Sigmoid colon (tissue), 7 donors: ENCODE measurements at regions of chr17 and their contacts with region 1.

Region 1: DNA sequence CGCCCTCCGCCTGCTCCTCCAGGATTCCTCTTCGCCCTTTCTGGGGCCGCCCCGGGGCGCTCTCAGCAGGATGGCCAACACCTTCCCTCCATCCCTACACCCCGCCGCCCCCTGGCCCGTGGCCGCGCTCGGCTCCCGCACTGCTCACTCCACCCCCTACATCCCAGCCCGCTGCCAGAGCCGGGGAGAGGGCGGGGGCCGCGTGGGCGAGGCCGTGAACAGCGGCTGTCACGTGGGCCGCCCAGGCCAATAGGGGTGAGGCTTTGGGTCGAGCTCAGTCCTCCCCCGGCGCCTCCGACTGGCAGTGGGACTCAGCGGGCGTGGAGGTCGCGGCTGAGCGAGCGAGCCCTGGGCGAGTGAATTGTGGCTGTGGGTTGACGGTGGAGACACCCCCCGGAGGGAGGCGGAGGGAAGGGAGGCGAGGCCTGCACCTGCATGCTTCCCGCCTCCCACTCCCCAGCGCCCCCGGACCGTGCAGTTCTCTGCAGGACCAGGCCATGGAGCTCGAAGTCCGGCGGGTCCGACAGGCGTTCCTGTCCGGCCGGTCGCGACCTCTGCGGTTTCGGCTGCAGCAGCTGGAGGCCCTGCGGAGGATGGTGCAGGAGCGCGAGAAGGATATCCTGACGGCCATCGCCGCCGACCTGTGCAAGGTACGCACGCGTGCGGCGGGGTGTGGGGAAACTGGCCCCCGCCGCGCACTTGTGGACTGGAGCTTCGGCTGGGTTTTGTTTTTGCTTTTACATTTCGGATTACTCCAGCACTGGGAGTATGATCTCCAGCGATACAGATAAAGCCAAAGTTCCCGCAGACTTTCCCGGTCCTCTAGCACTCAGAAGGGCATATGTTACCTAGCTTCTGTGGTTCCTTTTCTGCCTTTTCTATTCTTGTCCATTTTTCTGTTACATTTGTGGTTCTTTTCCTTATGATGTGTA is at the start of gene ALDH3A2:
- DNase-seq: peak; percentile 98
- H3K4me3 ChIP-seq: peak within 1 kb of the TSS; percentile 81 to 90 (median 88)
- H3K27ac ChIP-seq: peak within 1 kb of the TSS; percentile 86 to 99 (median 97)
- H3K4me1 ChIP-seq: peaks cover 0 to 63% (median 56%) of the 10 kb centered on the region in 4 donors
- H3K27me3 ChIP-seq: no peaks in the 10 kb centered on the region
- CTCF ChIP-seq: peak in 1 of 4 experiments; percentile 17
- EP300 ChIP-seq: peak in 1 of 4 donors; percentile 8
- POLR2A ChIP-seq: peak; percentile 92 to 94
- total RNA-seq, gene ALDH3A2: 56.8 to 104 (median 78.2) TPM

Region 2: DNA sequence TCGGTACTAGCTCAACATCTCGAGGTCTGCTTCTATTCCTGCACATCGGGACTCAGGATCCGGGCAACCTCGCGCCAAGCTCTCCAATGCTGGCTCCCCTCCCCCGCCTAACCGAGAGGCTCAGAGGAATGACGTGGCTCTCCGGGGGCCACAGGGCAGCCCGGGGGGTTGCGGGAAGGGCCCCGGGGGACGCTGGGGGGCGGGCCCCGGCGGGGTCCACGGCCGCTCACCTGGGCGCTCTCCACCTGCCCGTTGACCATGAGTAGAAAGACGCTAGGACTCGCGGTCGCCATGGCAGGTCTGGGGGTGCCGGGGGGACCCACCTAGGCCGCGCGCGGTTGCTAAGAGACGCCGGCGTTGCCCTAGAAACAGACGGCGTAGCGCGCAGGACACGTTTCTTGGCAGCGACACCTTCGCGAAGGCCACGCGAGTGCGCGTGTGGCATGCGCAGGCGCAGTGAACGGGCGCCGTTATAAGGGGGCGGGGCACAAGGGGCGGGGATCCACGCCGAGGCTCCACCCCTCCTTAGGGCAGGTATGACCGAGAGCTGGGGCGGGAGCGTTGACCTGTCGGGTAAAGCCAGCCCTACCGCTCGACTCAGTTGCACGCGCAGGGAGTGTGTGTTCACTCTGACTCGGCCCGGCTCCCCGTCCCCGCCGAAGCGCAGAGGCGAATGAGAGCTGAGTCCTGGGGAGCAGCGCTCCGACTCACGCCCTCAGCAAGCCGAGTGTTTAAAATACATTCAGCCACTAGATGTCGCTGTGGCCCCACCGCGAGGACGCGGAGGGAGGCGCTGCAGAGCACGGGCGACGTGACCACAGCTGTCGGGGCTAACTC is 286.2 kb before region 1 on chr17 and contains the start of gene B9D1:
- intact Hi-C with region 1: loop called (anchors 2 kb)
- DNase-seq: peak; percentile 97
- H3K4me3 ChIP-seq: peak within 1 kb of the TSS; percentile 65 to 83 (median 78)
- H3K27ac ChIP-seq: peak within 1 kb of the TSS; percentile 85 to 91 (median 88)
- H3K4me1 ChIP-seq: peaks cover 0 to 20% (median 17%) of the 10 kb centered on the region in 4 donors
- H3K27me3 ChIP-seq: no peaks in the 10 kb centered on the region
- CTCF ChIP-seq: peak; percentile 97 to 100 (median 98)
- EP300 ChIP-seq: peak in 2 of 4 donors; percentile 6 to 26
- POLR2A ChIP-seq: no peak
- total RNA-seq, gene B9D1: 15.2 to 22.4 (median 16.0) TPM

Region 3: DNA sequence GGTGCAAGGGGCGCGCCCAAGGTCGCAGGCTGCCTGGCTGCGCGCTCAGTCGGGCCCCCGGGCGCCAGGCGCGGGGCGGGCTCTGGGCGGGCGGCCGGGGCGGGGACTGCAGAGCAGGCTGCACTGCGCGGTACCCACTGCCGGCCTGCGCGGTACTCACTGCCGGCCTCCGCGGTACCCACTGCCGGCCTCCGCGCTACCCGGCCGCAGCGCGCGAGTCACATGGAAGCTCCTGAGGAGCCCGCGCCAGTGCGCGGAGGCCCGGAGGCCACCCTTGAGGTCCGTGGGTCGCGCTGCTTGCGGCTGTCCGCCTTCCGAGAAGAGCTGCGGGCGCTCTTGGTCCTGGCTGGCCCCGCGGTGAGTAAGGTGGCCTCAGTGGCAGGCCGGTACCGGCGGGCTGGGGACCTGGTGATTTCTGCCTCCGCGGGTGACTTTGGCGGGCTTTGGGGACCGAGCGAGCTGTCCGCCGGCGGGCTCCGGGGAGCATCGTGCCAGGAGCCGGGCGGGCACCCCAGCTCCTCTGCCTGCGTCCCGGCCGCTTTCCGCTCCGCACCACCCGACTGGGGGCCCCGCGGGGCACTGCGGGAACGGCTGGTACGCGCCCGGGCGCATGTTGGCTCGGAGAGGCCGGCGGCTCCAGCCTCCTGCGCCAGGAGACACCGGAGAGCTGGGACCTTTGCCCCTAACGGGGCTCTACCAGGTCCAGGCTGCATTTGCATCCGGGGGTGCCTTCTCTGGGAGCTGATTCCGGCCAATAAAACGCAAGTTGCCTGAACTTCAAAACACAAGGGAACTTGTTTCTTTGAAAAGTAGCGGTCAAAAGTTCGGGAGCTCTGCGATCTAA is 114.8 kb before region 1 on chr17 and contains the start of gene SLC47A1:
- intact Hi-C with region 1: loop called (anchors 5 kb)
- DNase-seq: no peak
- H3K4me3 ChIP-seq: peak within 1 kb of the TSS; percentile 30 to 62 (median 54)
- H3K27ac ChIP-seq: peak within 1 kb of the TSS in 1 of 4 donors; percentile 32
- H3K4me1 ChIP-seq: peaks cover 0 to 17% (median 7%) of the 10 kb centered on the region in 4 donors
- H3K27me3 ChIP-seq: peaks cover 0 to 16% (median 5%) of the 10 kb centered on the region in 3 donors
- CTCF ChIP-seq: no peak
- EP300 ChIP-seq: no peak
- POLR2A ChIP-seq: no peak
- total RNA-seq, gene SLC47A1: 0.82 to 8.2 (median 2.5) TPM

Region 4: GRCh38 chr17:19728079-19728495 is 79.3 kb after region 1 on chr17:
- intact Hi-C with region 1: loop called (anchors 1 kb)
- DNase-seq: peak; percentile 95
- H3K4me3 ChIP-seq: no peak overlapping the region
- H3K27ac ChIP-seq: peak overlapping the region; percentile 82 to 93 (median 90)
- H3K4me1 ChIP-seq: peaks cover 0 to 44% (median 35%) of the 10 kb centered on the region in 4 donors
- H3K27me3 ChIP-seq: no peaks in the 10 kb centered on the region
- CTCF ChIP-seq: no peak
- EP300 ChIP-seq: peak in 2 of 4 donors; percentile 19 to 49
- POLR2A ChIP-seq: no peak

Region 5: DNA sequence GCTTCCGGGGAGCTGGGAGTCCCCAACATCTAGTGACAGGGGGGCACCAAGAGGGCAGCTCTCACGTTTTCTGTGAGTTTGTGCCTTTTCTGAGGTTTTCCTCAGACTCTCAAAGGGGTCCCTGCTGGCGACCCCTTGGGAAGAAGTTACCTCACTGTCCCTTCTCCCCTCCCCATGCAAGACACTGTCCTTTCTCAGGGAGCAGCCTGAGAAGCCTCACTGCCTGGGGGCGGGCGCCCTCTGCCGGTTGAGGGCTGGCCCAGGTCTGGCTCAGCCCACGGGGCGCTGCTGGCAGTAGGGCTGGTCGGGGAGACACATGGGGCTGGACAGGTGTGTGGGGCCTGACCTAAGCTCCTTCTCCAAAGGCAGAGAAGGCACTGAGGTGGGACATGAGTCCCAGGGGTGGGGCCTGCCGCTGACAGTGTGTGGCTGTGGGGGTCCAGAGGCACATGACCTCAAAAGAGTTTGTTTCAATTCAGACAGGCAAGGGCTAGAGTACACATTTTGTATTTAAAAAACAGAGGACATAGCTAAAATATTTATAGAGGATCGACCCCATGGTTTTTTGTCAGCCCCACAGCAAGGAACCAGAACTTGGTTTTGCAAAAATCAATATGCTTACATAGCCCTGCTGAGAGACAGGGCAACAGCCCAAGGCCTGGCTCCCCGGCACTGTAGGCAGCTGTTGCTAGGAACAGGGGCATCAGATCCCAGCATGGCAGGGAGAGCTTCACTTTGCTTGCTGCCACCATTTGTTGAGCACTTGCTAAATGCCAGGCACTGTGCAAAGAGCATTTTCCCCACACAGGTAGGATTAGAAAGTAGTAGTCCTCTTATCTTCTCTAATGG is 117.9 kb after region 1 on chr17:
- intact Hi-C with region 1: loop called (anchors 2 kb)
- DNase-seq: peak; percentile 88
- H3K4me3 ChIP-seq: no peak overlapping the region
- H3K27ac ChIP-seq: no peak overlapping the region
- H3K4me1 ChIP-seq: peaks cover 0 to 21% (median 14%) of the 10 kb centered on the region in 4 donors
- H3K27me3 ChIP-seq: no peaks in the 10 kb centered on the region
- CTCF ChIP-seq: peak; percentile 91 to 96 (median 94)
- EP300 ChIP-seq: no peak
- POLR2A ChIP-seq: no peak